IMR-90 (cell line): ENCODE measurements at regions of chr1 and their contacts with region 1.

Region 1: DNA sequence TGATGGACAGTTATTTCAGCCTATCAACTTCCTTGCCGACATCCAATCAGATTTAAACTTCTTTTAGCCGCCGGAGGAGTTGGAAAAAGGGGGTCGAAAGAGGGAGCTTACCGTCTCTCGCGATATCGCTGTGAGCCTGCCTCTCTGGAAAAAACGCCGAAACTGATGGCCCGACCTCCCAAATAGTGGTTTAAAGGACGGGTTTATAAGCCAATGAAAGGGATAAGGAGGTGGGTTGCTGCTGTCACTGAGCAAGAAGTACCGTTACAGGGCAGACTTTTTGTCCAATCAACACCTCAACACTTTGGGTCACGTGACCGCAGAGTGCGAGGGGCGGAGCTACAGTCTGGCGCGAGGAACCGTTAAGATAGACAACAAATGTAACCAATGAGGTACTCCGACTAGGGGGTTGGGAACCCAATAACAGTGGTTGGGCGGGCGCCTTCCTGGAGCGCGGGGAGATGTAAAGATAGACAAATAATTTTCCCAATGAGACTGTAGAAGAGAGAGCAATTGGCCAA is at the start of gene RBM15:
- DNase-seq: peak; percentile 100
- ATAC-seq: peak; percentile 83
- H3K4me3 ChIP-seq: peak within 1 kb of the TSS; percentile 64
- H3K27ac ChIP-seq: peak within 1 kb of the TSS; percentile 82
- H3K4me1 ChIP-seq: peaks cover 18% of the 10 kb centered on the region
- H3K27me3 ChIP-seq: no peaks in the 10 kb centered on the region
- CTCF ChIP-seq: no peak
- POLR2A ChIP-seq: no peak
- RAD21 ChIP-seq: no peak
- total RNA-seq, gene RBM15: 31.7 and 32.2 TPM in 2 replicates

Region 2: GRCh38 chr1:110390692-110391245 is 51.8 kb after region 1 on chr1 and contains the start of gene SLC16A4:
- CTCF ChIA-PET with region 1: interaction called, 6 read pairs
- POLR2A ChIA-PET with region 1: no interaction called
- dilution Hi-C with region 1: no loop called
- in situ Hi-C with region 1: no loop called
- intact Hi-C with region 1: loop called (anchors 2 kb)
- DNase-seq: peak; percentile 81
- ATAC-seq: peak; percentile 51
- H3K4me3 ChIP-seq: peak within 1 kb of the TSS; percentile 43
- H3K27ac ChIP-seq: peak within 1 kb of the TSS; percentile 72
- H3K4me1 ChIP-seq: peaks cover 19% of the 10 kb centered on the region
- H3K27me3 ChIP-seq: no peaks in the 10 kb centered on the region
- CTCF ChIP-seq: no peak
- POLR2A ChIP-seq: peak; percentile 31; the same call in 1 of the 2 replicates
- RAD21 ChIP-seq: no peak
- total RNA-seq, gene SLC16A4: 65.2 and 73.0 TPM in 2 replicates

Region 3: DNA sequence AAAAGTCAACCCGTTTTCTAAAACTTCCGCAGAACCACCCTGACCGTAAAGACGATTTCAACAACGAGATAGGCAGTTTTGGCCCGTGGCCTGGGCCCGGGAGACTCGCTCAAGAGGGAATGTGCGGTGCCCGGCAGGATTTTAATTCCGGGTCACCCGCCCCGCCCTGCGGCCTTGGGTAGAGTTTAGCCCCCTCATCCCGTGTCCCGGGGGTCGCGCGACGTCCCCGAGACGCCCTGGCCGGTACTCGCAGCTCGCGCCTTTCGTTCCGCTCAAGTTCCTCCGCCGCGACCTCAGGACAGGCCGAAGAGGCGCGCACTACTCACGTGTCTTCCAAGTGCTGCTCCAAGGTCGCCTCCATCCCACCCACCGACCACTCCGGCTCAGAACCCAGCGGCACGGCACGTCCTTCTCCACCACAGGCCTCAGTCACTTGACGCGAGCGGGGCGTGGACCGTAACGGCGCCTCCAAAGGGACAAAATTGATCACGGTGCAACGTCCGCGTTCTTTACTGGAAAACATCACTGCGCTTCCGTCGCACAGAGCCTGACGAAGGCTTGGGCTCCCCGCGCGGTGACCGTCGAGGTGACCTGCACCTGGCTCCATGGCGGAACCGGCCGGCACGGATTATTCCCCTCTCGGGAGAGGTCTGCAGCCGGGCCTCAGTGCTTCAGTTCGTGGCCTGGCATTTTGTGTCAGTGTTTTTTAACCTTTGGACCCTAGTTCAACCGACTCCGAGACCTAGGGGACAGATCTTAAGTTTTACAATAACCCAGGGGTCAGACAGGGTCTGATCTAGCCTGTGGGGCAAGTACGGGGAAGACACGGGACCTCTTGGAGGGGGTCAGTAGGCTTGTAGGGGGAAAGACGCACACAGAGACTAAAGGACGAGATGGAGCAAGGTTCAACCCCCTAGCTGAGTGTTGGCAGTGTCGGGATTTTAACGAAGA is 68.6 kb after region 1 on chr1 and contains the start of gene LAMTOR5:
- CTCF ChIA-PET with region 1: interaction called, 3 read pairs
- POLR2A ChIA-PET with region 1: no interaction called
- dilution Hi-C with region 1: no loop called
- in situ Hi-C with region 1: loop called (anchors 5 kb)
- intact Hi-C with region 1: loop called (anchors 1 kb)
- DNase-seq: peak; percentile 92
- ATAC-seq: peak; percentile 97
- H3K4me3 ChIP-seq: peak within 1 kb of the TSS; percentile 61
- H3K27ac ChIP-seq: peak within 1 kb of the TSS; percentile 75
- H3K4me1 ChIP-seq: peaks cover 2% of the 10 kb centered on the region; the same call in 1 of the 2 replicates
- H3K27me3 ChIP-seq: no peaks in the 10 kb centered on the region
- CTCF ChIP-seq: peak; percentile 31
- POLR2A ChIP-seq: peak; percentile 89
- RAD21 ChIP-seq: peak; percentile 45
- total RNA-seq, gene LAMTOR5: 159 and 177 TPM in 2 replicates